ENCODE measurements at regions of chr17 and their contacts with region 1.

Region 1: GRCh38 chr17:48037036-48037837 is at the start of gene COPZ2:
- DNase-seq: no peak
- H3K4me3 ChIP-seq: peak within 1 kb of the TSS; percentile 78
- H3K27me3 ChIP-seq: no peaks in the 10 kb centered on the region
- CTCF ChIP-seq: peak; percentile 79
- polyA plus RNA-seq, gene COPZ2: 132 and 181 TPM in 2 replicates

Region 2: GRCh38 chr17:48047741-48048383 is 10.6 kb after region 1 on chr17 and contains the start of gene NFE2L1:
- CTCF ChIA-PET with region 1: interaction called, 20 read pairs
- POLR2A ChIA-PET with region 1: no interaction called
- DNase-seq: peak; percentile 98
- H3K4me3 ChIP-seq: peak within 1 kb of the TSS; percentile 79
- H3K27me3 ChIP-seq: no peaks in the 10 kb centered on the region
- CTCF ChIP-seq: no peak
- polyA plus RNA-seq, gene NFE2L1: 255 and 281 TPM in 2 replicates

Region 3: GRCh38 chr17:48054238-48055185 is 17.3 kb after region 1 on chr17:
- CTCF ChIA-PET with region 1: interaction called, 20 read pairs
- POLR2A ChIA-PET with region 1: interaction called, 12 read pairs
- DNase-seq: peak; percentile 57
- H3K4me3 ChIP-seq: peak overlapping the region; percentile 36
- H3K27me3 ChIP-seq: no peaks in the 10 kb centered on the region
- CTCF ChIP-seq: no peak